CD8-positive, alpha-beta T cell (primary cell): ENCODE measurements at regions of chr22 and their contacts with region 1.

Region 1: GRCh38 chr22:40950962-40951794 is at the start of gene RBX1:
- DNase-seq: peak; percentile 97 to 99 (median 99)
- ATAC-seq: peak; percentile 84
- H3K4me3 ChIP-seq: peak within 1 kb of the TSS; percentile 95 to 100
- H3K4me3 Mint-ChIP-seq: peak within 1 kb of the TSS; percentile 100
- H3K27ac ChIP-seq: peak within 1 kb of the TSS; percentile 99 to 100
- H3K27ac Mint-ChIP-seq: peak within 1 kb of the TSS; percentile 100
- H3K4me1 ChIP-seq: peaks cover 28% of the 10 kb centered on the region
- H3K4me1 Mint-ChIP-seq: peaks cover 33% of the 10 kb centered on the region
- H3K27me3 ChIP-seq: no peaks in the 10 kb centered on the region
- H3K27me3 Mint-ChIP-seq: no peaks in the 10 kb centered on the region
- CTCF ChIP-seq: no peak
- total RNA-seq, gene RBX1: 22.1 to 22.3 TPM

Region 2: DNA sequence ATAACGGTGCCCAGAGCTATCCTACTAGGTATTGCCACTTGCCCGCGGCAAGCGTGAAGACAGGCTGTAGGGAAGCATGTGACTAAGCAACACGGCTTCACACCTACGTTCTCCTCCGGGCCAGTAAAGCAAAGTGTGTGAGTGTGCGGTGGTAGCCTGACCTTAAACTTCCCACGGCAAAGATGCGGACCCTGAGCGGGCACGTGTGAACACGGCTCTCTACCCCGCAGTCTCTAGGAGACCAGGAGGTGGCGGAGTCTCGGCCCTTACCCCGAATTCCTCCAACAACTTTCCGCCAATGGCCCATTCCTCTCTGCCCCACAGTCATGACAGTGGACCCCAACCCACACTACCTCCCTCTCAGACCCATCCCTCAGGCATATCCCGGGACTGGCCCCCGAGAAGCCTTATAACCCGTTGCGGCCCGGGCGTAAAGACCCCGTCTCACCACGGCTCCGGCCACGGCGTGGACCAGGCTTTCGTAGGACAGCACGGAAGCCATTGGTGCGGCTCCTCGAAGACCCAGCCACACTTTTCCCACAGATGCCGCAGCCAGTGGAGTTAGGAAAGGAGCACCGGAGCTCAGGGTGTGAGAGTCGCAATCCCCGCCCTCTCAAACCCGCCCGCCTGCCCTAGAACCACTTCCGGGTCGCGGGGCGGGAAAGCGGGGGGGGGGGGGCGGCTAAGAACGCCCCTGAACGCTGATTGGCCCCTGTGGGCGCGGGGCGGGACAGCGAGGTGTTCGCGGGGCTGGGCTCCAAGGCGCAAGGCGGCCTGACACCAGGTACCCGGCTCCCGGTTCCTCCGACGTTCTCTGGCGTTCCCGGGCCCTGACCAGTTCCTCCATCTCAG is 132.2 kb before region 1 on chr22 and contains the start of gene SLC25A17:
- CTCF ChIA-PET with region 1: no interaction called
- POLR2A ChIA-PET with region 1: no interaction called
- intact Hi-C with region 1: loop called (anchors 1 kb)
- DNase-seq: peak; percentile 72 to 93 (median 88)
- ATAC-seq: peak; percentile 88
- H3K4me3 ChIP-seq: peak within 1 kb of the TSS; percentile 87 to 91
- H3K4me3 Mint-ChIP-seq: peak within 1 kb of the TSS; percentile 96
- H3K27ac ChIP-seq: peak within 1 kb of the TSS; percentile 69 to 81
- H3K27ac Mint-ChIP-seq: peak within 1 kb of the TSS; percentile 88
- H3K4me1 ChIP-seq: peaks cover 18% of the 10 kb centered on the region
- H3K4me1 Mint-ChIP-seq: peaks cover 41% of the 10 kb centered on the region
- H3K27me3 ChIP-seq: no peaks in the 10 kb centered on the region
- H3K27me3 Mint-ChIP-seq: no peaks in the 10 kb centered on the region
- CTCF ChIP-seq: no peak
- total RNA-seq, gene SLC25A17: 3.2 to 4.0 TPM

Region 3: DNA sequence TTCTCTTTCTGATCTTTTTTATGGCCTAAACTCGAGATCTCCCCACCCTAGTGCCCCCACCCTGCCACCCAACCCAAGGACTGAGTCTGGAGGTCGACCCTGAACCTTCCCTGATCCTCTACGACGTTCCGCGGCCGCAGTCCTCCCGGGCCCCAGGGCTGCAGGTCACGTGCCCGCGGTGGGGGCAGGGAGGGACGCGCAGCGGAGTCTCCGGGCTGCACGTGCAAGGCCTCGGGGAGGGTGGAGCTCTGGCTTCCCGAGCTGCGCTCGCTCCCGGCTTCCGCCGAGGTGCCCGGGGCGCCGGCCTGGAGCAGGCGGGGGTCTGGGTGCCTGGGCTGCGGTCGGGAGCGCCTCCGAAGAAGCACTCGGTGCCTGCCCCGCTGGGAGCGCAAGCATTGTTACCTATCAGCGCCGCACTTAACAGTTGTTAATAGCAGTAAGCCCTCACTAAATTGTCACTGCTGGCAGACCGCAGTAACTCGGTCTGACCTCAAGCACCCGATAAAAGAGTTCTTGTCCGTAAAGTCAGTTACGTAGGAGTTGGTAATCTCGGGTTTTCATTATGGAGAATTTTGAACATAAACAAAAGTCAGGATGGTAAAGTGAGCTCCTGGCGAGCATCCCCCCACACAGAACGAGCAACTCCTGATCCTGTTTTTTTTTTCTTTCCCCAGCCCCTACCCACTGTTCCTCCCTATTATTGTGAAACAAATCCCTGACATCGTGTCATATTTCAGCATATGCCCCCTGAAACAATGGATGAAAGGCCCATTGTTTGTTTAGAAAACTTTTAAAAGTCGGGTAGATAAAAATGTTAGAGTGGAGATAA is 71.5 kb after region 1 on chr22:
- CTCF ChIA-PET with region 1: no interaction called
- POLR2A ChIA-PET with region 1: interaction called, 19 read pairs
- intact Hi-C with region 1: loop called (anchors 1 kb)
- DNase-seq: peak; percentile 46 to 89 (median 80)
- ATAC-seq: peak; percentile 77
- H3K4me3 ChIP-seq: peak overlapping the region; percentile 60 to 77
- H3K4me3 Mint-ChIP-seq: peak overlapping the region; percentile 81
- H3K27ac ChIP-seq: peak overlapping the region; percentile 74 to 84
- H3K27ac Mint-ChIP-seq: peak overlapping the region; percentile 84
- H3K4me1 ChIP-seq: peaks cover 12% of the 10 kb centered on the region
- H3K4me1 Mint-ChIP-seq: peaks cover 14% of the 10 kb centered on the region
- H3K27me3 ChIP-seq: peaks cover 0 to 4% of the 10 kb centered on the region in 2 experiments
- H3K27me3 Mint-ChIP-seq: no peaks in the 10 kb centered on the region
- CTCF ChIP-seq: no peak

Region 4: DNA sequence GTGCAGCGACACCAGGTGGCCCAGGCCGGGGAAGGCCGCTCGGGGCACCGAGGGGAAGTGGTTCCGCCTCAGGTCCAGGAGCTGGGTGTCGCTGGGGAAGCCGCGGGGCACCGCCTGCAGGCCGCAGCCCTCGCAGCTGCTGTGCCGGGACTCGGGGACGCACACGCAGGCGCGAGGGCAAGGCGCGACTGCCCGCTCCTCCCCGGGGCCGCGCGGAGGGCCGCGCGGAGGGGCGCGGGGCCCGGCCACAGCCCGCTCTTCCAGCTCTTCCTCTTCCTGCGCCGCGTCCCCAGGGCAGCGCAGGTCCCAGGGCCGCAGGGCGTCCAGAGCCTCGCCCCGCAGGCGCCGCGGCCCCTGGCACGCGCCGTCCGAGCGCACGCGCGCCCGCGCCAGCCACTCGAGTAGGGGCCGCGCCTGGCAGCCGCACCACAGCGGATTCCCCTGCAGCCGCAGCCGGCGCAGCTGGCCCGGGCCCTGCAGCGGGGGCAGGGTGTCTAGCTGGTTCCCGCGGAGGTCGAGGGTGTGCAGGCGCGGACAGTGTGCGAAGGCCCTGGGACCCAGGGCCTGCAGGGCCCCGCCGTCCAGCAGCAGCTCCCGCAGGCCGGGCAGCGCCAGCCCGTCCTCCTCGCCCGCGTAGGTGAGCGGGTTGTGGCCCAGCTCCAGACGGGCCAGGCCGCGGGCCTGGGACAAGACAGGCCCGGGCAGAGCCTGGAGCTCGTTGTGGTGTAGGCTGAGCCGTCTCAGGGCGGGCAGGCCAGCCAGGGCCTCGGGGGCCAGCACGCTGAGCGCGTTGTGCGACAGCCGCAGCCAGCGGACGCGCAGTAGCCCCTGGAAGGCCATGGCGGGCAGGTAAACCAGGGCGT is 286.8 kb after region 1 on chr22:
- CTCF ChIA-PET with region 1: interaction called, 5 read pairs
- POLR2A ChIA-PET with region 1: interaction called, 15 read pairs
- intact Hi-C with region 1: no loop called
- DNase-seq: peak; percentile 67 to 91 (median 83)
- ATAC-seq: peak; percentile 92
- H3K4me3 ChIP-seq: peak overlapping the region; percentile 39 to 65
- H3K4me3 Mint-ChIP-seq: peak overlapping the region; percentile 76
- H3K27ac ChIP-seq: no peak overlapping the region
- H3K27ac Mint-ChIP-seq: no peak overlapping the region
- H3K4me1 ChIP-seq: peaks cover 7% of the 10 kb centered on the region
- H3K4me1 Mint-ChIP-seq: peaks cover 11% of the 10 kb centered on the region
- H3K27me3 ChIP-seq: no peaks in the 10 kb centered on the region
- H3K27me3 Mint-ChIP-seq: no peaks in the 10 kb centered on the region
- CTCF ChIP-seq: peak; percentile 67

Region 5: DNA sequence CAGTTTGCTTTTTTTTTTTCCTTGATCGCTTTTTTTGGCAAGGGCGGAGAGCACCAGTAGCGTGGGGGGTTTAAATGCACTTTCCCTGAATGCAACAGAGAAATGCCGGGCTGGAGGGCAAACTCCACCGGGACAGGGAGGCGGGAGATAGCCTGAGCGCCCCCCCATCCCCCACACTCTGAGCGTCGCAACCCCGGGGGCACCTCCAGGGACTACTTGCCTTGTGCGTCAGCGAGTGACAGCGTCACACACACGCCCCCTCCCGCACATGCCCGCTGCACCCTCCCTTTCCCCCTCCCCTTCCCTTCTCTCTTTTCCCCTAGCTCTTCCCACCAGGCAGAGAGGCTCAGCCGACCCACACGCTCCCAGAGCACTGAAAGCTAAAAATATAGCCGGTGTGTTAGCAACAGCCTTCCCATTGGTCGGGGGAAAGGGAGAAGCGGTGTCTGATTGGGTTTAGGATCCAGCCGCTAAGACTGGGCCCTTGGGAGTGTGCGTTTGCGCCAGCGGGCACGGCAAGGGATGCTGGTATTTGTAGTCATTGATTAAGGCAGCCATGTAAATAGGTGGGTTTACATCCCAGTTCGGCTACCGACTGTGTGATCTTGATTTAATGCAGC is 497.1 kb after region 1 on chr22:
- CTCF ChIA-PET with region 1: no interaction called
- POLR2A ChIA-PET with region 1: no interaction called
- intact Hi-C with region 1: loop called in 1 of 2 experiments (anchors 10 kb)
- DNase-seq: peak; percentile 77 to 97 (median 88)
- ATAC-seq: peak; percentile 70
- H3K4me3 ChIP-seq: peak overlapping the region; percentile 79 to 96
- H3K4me3 Mint-ChIP-seq: peak overlapping the region; percentile 90
- H3K27ac ChIP-seq: peak overlapping the region; percentile 78 to 99
- H3K27ac Mint-ChIP-seq: peak overlapping the region; percentile 98
- H3K4me1 ChIP-seq: peaks cover 11% of the 10 kb centered on the region
- H3K4me1 Mint-ChIP-seq: peaks cover 23% of the 10 kb centered on the region
- H3K27me3 ChIP-seq: no peaks in the 10 kb centered on the region
- H3K27me3 Mint-ChIP-seq: no peaks in the 10 kb centered on the region
- CTCF ChIP-seq: no peak

Region 6: GRCh38 chr22:41517172-41518047 is 566.2 kb after region 1 on chr22:
- CTCF ChIA-PET with region 1: no interaction called
- POLR2A ChIA-PET with region 1: no interaction called
- intact Hi-C with region 1: no loop called
- DNase-seq: peak in 6 of 9 experiments; percentile 23 to 62 (median 48)
- ATAC-seq: no peak
- H3K4me3 ChIP-seq: no peak overlapping the region
- H3K4me3 Mint-ChIP-seq: no peak overlapping the region
- H3K27ac ChIP-seq: no peak overlapping the region
- H3K27ac Mint-ChIP-seq: no peak overlapping the region
- H3K4me1 ChIP-seq: no peaks in the 10 kb centered on the region
- H3K4me1 Mint-ChIP-seq: no peaks in the 10 kb centered on the region
- H3K27me3 ChIP-seq: no peaks in the 10 kb centered on the region
- H3K27me3 Mint-ChIP-seq: no peaks in the 10 kb centered on the region
- CTCF ChIP-seq: peak; percentile 59